ENCODE measurements at regions of chr6 and their contacts with region 1.

Region 1: GRCh38 chr6:35452186-35453090 is at the start of gene FANCE:
- H3K4me3 ChIP-seq: peak within 1 kb of the TSS; percentile 78
- H3K27ac ChIP-seq: peak within 1 kb of the TSS; percentile 83
- H3K4me1 ChIP-seq: peaks cover 23% of the 10 kb centered on the region
- CTCF ChIP-seq: no peak

Region 2: DNA sequence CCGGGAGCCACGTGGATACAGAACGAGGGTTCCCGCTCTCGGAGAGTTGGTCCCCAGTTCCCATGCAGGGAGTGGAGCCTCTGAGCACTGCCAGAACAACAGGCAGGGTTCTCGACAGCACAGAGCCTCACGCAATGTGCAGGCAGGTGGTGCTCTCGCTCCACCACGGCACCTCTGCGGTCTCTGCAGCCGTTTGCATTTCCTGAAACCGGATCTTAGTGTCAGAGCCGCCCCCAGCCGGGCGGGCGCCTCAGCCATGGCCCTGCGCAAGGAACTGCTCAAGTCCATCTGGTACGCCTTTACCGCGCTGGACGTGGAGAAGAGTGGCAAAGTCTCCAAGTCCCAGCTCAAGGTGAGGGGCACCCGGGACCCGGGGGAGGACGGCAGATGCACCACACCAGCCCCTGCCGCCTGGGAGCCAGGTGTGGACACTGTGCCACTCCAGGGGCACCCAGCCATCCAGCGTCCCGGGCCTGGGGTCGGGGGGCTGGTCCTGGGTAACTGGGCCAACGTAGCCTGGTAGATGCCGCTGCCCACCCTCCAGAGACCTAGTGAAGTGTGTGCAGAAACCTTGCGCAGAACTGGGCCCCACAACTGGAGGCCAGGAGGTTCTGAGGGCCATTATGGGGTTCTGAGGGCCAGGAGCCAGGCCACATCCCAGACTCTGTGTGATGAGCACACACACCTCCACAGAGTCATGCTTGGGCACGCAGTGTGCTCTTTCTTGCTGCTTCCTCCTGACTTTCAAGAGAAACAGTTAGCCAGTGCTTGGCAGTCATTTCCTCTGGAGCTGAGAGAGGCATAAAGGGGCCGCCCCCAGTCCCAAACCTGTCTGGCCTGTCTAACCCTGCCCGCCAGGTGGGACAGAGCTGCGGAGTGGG is 154.6 kb before region 1 on chr6 and contains the start of gene DEF6:
- CTCF ChIA-PET with region 1: interaction called, 74 read pairs
- POLR2A ChIA-PET with region 1: no interaction called
- H3K4me3 ChIP-seq: no peak within 1 kb of the TSS
- H3K27ac ChIP-seq: no peak within 1 kb of the TSS
- H3K4me1 ChIP-seq: no peaks in the 10 kb centered on the region
- CTCF ChIP-seq: 0 out of 2 replicates have a peak, but pooled peaks have one; percentile 45

Region 3: GRCh38 chr6:35354361-35355135 is 97.9 kb before region 1 on chr6:
- CTCF ChIA-PET with region 1: interaction called, 12 read pairs
- POLR2A ChIA-PET with region 1: no interaction called
- H3K4me3 ChIP-seq: no peak overlapping the region
- H3K27ac ChIP-seq: no peak overlapping the region
- H3K4me1 ChIP-seq: no peaks in the 10 kb centered on the region; the same call in 1 of the 2 replicates
- CTCF ChIP-seq: no peak

Region 4: DNA sequence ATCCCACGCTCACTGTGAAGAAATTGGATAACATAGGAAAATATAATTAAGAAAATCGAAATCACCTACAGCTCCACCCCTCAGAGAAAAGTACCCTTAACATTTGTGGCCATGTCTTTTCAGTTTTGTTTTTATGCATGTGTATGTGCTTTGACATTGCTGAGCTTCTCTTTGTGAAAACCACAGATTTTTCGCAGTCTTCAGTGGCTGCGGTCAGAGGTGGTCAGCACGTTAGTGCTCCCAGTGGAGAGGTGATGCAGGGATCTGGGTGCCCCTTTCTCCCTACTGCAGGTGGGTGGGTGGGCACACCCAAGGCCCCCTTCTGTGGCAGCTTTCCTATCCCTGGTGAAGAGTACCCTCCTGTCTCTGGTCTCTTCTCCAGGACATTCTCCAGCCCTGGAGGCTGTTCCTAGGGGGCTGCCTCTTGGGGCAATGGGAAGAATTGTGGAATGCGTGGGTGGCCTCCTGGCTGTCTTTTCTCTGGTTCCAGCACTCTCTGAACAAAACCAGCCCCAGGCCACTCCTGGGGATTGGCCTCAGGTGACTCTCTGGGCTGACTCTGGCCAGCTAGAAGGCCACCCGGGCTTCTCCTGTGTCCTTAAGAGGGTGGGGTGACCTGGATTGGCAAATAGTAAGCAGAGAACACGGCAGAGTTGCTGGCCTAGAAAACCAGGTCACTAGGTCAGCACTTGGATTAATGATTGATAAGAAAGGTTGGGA is 50.1 kb before region 1 on chr6:
- CTCF ChIA-PET with region 1: interaction called, 12 read pairs
- POLR2A ChIA-PET with region 1: no interaction called
- H3K4me3 ChIP-seq: no peak overlapping the region
- H3K27ac ChIP-seq: no peak overlapping the region
- H3K4me1 ChIP-seq: no peaks in the 10 kb centered on the region
- CTCF ChIP-seq: no peak

Region 5: GRCh38 chr6:35435074-35435837 is 17.2 kb before region 1 on chr6:
- CTCF ChIA-PET with region 1: interaction called, 39 read pairs
- POLR2A ChIA-PET with region 1: interaction called, 4 read pairs
- H3K4me3 ChIP-seq: no peak overlapping the region
- H3K27ac ChIP-seq: no peak overlapping the region
- H3K4me1 ChIP-seq: peaks cover 4% of the 10 kb centered on the region; the same call in 1 of the 2 replicates
- CTCF ChIP-seq: no peak

Region 6: GRCh38 chr6:35931120-35931561 is 478.7 kb after region 1 on chr6:
- CTCF ChIA-PET with region 1: no interaction called
- POLR2A ChIA-PET with region 1: no interaction called
- H3K4me3 ChIP-seq: no peak overlapping the region
- H3K27ac ChIP-seq: no peak overlapping the region
- H3K4me1 ChIP-seq: no peaks in the 10 kb centered on the region
- CTCF ChIP-seq: no peak